ENCODE measurements at regions of chr18 and their contacts with region 1.

Region 1: GRCh38 chr18:58847383-58848071 is 17.1 kb upstream of the ZNF532 start:
- DNase-seq: peak; percentile 55 to 71 (median 63)
- ATAC-seq: peak in 3 of 4 donors; percentile 52 to 66 (median 60)
- H3K4me3 ChIP-seq: peak overlapping the region in 11 of 12 donors; percentile 2 to 54 (median 45)
- H3K27ac ChIP-seq: peak overlapping the region in 10 of 12 donors; percentile 1 to 70 (median 56)
- H3K4me1 ChIP-seq: peaks cover 0 to 36% (median 13%) of the 10 kb centered on the region in 12 donors
- H3K27me3 ChIP-seq: no peaks in the 10 kb centered on the region
- CTCF ChIP-seq: no peak
- POLR2A ChIP-seq: no peak

Region 2: DNA sequence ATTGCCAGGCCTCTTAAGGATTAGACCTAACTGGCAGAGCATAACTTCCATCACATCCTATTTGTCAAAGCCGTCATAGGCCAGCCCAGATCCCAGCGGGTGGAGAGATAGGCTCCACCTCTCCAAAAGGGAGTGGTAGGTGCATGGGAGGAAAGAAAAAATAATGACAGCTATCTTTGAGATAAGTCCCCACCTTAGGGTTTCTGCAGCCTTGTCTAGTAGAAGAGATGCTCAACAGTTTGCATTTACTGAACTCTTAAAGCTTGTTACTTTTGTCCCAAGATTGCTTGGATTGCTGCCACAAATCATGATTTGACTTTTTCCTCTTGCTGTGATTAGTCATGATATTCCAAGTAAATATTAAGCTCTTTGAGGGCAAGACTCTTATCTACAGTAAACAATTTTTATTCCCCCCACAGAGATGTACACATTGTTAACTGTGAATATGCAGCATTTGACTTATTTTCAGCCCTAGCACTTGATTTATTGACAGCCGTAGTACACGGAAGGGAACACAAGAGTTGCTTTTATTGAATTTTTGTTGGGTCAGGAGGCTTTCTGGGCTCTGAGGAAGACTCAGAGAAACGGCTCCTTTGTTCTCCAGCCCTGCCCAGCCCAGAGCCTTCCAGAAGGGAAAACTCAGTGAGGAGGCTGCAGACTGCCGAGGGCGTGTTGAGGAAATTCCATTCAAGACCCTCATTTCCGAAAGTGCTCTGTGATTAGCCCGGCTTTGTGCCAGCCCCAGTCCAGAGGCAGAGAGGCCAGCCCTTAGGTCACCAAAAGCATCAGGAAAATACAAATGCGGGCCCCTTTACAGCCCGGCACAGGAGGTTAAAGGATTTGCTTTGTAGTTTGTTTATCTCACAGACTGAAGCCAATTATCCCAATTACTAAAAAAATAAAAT is 58.3 kb before region 1 on chr18:
- intact Hi-C with region 1: loop called in 5 of 10 experiments (anchors 2 to 5 kb)
- DNase-seq: peak; percentile 68 to 77 (median 69)
- ATAC-seq: peak in 3 of 4 donors; percentile 67 to 77 (median 68)
- H3K4me3 ChIP-seq: no peak overlapping the region
- H3K27ac ChIP-seq: peak overlapping the region; percentile 5 to 76 (median 72)
- H3K4me1 ChIP-seq: peaks cover 0 to 44% (median 27%) of the 10 kb centered on the region in 12 donors
- H3K27me3 ChIP-seq: no peaks in the 10 kb centered on the region
- CTCF ChIP-seq: no peak
- POLR2A ChIP-seq: no peak

Region 3: DNA sequence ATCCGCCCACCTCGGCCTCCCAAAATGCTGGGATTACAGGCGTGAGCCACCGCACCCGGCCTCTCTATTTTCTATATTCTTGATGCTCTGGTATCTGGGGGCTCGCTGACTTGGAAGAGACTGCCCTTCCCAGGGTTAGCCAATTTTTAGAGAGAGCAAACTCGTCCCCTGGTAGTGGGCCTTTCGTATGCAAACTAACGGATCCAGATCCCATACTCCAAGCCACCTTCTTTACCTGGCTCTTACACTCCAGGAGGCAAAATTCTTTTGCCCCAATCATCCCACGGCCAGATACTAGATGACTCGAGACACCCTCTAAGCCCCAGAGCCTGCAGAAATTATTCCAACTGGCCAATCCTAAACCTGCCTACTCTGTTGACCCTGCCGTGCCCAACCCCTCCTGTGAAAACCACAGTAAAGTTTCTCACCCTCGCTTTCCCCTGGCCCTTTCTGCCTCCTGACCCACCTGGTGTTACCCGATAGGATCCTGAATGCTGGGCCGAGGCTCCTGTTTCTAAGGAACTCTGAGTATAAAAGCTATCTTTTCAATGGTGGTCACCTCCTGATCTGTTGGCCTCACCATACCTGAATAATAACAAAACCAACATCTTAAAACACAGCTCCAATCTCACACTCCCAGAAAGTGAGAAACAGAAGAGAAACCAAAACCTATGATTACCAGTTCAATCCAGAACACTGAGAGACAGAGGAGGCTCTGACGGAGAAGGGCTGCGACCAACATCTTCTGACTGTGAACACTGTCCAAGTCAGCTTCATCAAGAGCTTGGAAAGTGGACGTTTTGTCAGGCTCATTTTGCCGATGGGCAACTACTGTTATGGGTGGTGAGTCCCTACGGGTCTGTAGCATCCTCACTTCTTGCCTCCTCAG is 40.5 kb before region 1 on chr18:
- intact Hi-C with region 1: loop called in 1 of 10 experiments (anchors 5 kb)
- DNase-seq: no peak
- ATAC-seq: no peak
- H3K4me3 ChIP-seq: no peak overlapping the region
- H3K27ac ChIP-seq: no peak overlapping the region
- H3K4me1 ChIP-seq: no peaks in the 10 kb centered on the region
- H3K27me3 ChIP-seq: no peaks in the 10 kb centered on the region
- CTCF ChIP-seq: no peak
- POLR2A ChIP-seq: no peak

Region 4: DNA sequence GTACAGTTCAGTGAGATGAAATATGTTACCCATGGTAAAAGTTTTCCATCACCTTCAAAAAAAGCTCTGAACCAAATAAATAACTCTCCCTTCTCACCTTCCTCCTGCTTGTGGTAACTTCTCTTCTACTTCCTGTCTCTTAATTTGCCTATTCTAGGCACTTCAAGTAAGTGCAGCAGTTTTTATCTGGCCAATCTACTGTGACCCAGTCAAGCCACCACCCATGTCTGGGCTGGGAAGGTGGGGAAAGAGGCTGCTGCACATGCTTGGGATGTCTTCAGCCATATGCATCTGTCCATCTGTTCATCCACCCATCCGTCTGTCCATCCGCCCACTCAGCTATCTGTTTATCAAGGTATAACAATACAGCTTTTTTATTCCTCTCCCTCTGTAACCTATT is 48.7 kb after region 1 on chr18:
- intact Hi-C with region 1: no loop called
- DNase-seq: no peak
- ATAC-seq: no peak
- H3K4me3 ChIP-seq: no peak overlapping the region
- H3K27ac ChIP-seq: peak overlapping the region in 6 of 12 donors; percentile 5 to 60 (median 23)
- H3K4me1 ChIP-seq: peaks cover 0 to 85% (median 55%) of the 10 kb centered on the region in 12 donors
- H3K27me3 ChIP-seq: no peaks in the 10 kb centered on the region
- CTCF ChIP-seq: no peak
- POLR2A ChIP-seq: no peak

Measured in heart left ventricle (tissue), 16 donors.